ENCODE measurements at regions of chr1 and their contacts with region 1.

Region 1: DNA sequence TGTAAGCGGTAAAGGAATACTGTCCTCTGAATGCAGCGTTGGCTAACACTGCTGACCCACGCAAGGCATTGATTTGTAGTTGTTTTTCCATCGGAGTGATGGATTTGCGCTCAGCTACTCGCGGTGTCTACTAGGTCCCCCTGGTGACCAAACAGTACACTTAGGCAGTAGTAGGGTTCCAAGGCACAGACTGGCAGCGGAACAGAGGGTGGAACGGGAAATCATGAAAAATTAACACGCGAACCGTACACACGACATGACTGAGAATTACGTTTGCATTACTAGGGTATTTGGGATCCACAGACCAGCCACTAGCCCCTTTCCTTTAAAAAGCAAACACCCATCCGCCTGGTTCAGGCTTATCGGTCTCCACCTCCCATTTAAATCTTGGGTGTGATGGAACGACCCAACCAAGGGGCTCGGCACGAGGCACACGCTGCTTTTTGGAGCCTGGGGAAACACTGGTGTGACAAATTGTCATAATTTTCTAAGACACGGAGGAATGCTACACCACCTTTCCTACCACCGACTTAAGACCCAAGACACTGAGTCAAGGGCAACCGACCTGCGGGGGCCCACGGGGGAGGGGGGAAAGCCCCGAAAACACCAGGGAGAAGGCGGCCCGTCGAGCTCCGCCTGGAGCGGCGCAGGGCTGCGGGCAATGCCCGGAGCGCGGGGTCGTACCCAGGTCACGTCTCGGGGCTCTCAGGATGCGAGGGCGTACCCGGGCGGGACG is 699 bp downstream of the DIPK1A start:
- DNase-seq: peak; percentile 79
- ATAC-seq: peak; percentile 77
- H3K4me3 ChIP-seq: peak overlapping the region; percentile 85
- H3K27ac ChIP-seq: no peak overlapping the region
- H3K4me1 ChIP-seq: peaks cover 10% of the 10 kb centered on the region
- H3K27me3 ChIP-seq: no peaks in the 10 kb centered on the region
- CTCF ChIP-seq: peak; percentile 87

Region 2: GRCh38 chr1:92858564-92859399 is 101.8 kb before region 1 on chr1:
- CTCF ChIA-PET with region 1: interaction called, 8 read pairs
- POLR2A ChIA-PET with region 1: no interaction called
- intact Hi-C with region 1: loop called (anchors 1 kb)
- DNase-seq: peak; percentile 91
- ATAC-seq: peak; percentile 80
- H3K4me3 ChIP-seq: peak overlapping the region; percentile 54
- H3K27ac ChIP-seq: no peak overlapping the region
- H3K4me1 ChIP-seq: peaks cover 6% of the 10 kb centered on the region; the same call in 1 of the 2 replicates
- H3K27me3 ChIP-seq: no peaks in the 10 kb centered on the region
- CTCF ChIP-seq: peak; percentile 99

Region 3: GRCh38 chr1:92994105-92994712 is 33.6 kb after region 1 on chr1:
- CTCF ChIA-PET with region 1: interaction called, 17 read pairs
- POLR2A ChIA-PET with region 1: no interaction called
- intact Hi-C with region 1: loop called (anchors 1 kb)
- DNase-seq: peak; percentile 88
- ATAC-seq: peak; percentile 65
- H3K4me3 ChIP-seq: no peak overlapping the region
- H3K27ac ChIP-seq: no peak overlapping the region
- H3K4me1 ChIP-seq: peaks cover 26% of the 10 kb centered on the region
- H3K27me3 ChIP-seq: no peaks in the 10 kb centered on the region
- CTCF ChIP-seq: peak; percentile 91

Region 4: GRCh38 chr1:93061895-93062792 is 101.6 kb after region 1 on chr1:
- CTCF ChIA-PET with region 1: interaction called, 6 read pairs
- POLR2A ChIA-PET with region 1: no interaction called
- intact Hi-C with region 1: loop called (anchors 1 kb)
- DNase-seq: peak; percentile 67
- ATAC-seq: peak; percentile 97
- H3K4me3 ChIP-seq: no peak overlapping the region
- H3K27ac ChIP-seq: no peak overlapping the region
- H3K4me1 ChIP-seq: peaks cover 5% of the 10 kb centered on the region; the same call in 1 of the 2 replicates
- H3K27me3 ChIP-seq: no peaks in the 10 kb centered on the region
- CTCF ChIP-seq: peak; percentile 90

Region 5: DNA sequence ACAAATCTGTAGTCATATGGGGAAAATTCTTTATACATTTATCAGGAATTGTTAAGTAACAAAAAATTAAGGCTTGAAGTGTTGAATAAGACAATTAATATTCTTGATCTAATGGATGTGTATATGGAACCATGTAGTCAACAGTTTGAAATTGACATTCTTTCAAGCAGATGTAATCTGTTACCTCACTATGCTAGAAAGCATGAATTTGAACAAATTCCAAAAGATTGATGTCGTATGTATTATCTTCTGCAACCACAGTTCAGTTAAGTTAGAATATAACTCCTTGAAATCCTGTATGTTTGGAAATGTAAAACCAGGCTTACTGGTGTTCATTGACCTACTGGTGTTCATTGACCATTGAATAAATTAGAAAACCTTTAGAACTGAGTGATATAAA is 236.0 kb after region 1 on chr1:
- CTCF ChIA-PET with region 1: no interaction called
- POLR2A ChIA-PET with region 1: interaction called, 19 read pairs
- intact Hi-C with region 1: no loop called
- DNase-seq: no peak
- ATAC-seq: no peak
- H3K4me3 ChIP-seq: no peak overlapping the region
- H3K27ac ChIP-seq: no peak overlapping the region
- H3K4me1 ChIP-seq: no peaks in the 10 kb centered on the region
- H3K27me3 ChIP-seq: no peaks in the 10 kb centered on the region
- CTCF ChIP-seq: no peak

Measured in PC-3 (cell line).